ENCODE measurements at regions of chr1 and their contacts with region 1.

Region 1: GRCh38 chr1:62725255-62725654 is 37.1 kb upstream of the DOCK7 start:
- DNase-seq: no peak
- H3K4me3 Mint-ChIP-seq: no peak overlapping the region
- H3K27ac Mint-ChIP-seq: no peak overlapping the region
- H3K4me1 Mint-ChIP-seq: peaks cover 25% of the 10 kb centered on the region
- H3K27me3 Mint-ChIP-seq: no peaks in the 10 kb centered on the region
- CTCF ChIP-seq: no peak

Region 2: GRCh38 chr1:62691062-62691844 is 34.0 kb before region 1 on chr1:
- CTCF ChIA-PET with region 1: no interaction called
- intact Hi-C with region 1: loop called (anchors 5 kb)
- DNase-seq: no peak
- H3K4me3 Mint-ChIP-seq: peak overlapping the region; percentile 89
- H3K27ac Mint-ChIP-seq: peak overlapping the region; percentile 52
- H3K4me1 Mint-ChIP-seq: peaks cover 38% of the 10 kb centered on the region
- H3K27me3 Mint-ChIP-seq: no peaks in the 10 kb centered on the region
- CTCF ChIP-seq: no peak